GM23248 (cell line): ENCODE measurements at regions of chr1 and their contacts with region 1.

Region 1: DNA sequence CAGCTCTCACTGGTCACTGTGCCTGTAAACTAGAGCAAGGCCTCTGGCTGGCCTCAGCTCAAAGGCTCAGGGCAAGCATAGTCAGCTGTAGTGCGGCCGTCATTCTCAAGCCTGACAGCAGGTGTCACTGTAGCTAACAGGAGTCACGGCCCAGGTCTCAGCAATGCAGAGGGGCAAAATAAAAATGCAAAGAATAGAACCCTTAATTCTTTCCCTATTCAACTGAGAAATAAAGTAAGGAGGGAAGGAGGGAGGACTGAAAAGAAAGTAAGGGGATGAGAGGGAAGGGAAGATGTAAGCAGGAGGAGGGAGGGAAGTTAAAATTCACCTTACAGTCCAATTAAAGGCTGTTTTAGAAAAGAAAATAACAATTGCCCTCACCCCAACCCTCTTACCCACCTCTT is 106.1 kb downstream of the KIAA0319L start:
- DNase-seq: peak; percentile 87
- H3K4me3 ChIP-seq: no peak overlapping the region
- H3K27ac ChIP-seq: no peak overlapping the region
- H3K4me1 ChIP-seq: peaks cover 55% of the 10 kb centered on the region
- H3K27me3 ChIP-seq: no peaks in the 10 kb centered on the region

Region 2: GRCh38 chr1:34441259-34442069 is 1009.7 kb before region 1 on chr1:
- in situ Hi-C with region 1: no loop called
- DNase-seq: no peak
- H3K4me3 ChIP-seq: no peak overlapping the region
- H3K27ac ChIP-seq: no peak overlapping the region
- H3K4me1 ChIP-seq: no peaks in the 10 kb centered on the region
- H3K27me3 ChIP-seq: peaks cover 26% of the 10 kb centered on the region

Region 3: DNA sequence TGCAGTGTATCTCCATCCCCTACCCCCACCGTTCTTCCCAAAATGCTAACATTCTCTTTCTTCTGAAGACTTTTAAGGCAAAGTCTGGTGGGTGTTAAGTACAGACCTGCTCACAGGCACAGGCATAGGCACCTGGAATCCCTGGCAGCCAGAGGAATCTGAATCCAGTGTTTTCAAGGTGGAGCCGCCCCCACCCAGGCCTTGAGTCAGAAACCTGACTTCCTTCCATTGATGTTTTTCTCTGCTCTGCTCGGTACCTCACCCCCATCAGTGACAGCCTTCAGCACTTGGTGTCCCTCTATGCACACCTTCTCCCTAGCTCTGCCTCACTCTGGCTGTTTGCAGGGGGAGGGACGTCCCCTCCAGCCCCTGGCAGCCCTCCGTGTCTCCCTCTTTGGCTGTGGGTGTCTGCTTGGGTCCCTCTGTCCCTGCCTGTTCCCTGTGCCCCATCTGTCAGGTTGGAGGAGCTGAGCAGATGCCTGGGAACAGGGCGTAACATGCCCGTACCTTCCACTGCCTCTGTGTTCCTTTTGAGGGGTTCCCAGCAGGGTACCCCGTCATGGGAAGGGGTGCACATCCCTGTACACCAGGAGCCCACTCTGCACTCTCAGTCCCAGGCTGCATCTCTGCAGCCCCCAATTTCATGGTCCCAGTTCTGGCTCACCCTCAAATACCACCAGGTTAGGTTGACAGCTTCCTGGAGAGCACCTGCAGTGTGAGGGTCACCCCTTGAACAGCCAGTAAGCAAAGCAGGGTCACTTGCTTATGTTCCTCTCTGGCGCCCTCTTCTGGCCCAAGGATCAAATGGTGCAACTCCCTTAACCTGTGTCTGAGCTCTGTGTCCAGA is 113.1 kb after region 1 on chr1:
- in situ Hi-C with region 1: loop called (anchors 5 kb)
- DNase-seq: peak; percentile 81
- H3K4me3 ChIP-seq: no peak overlapping the region
- H3K27ac ChIP-seq: no peak overlapping the region
- H3K4me1 ChIP-seq: peaks cover 3% of the 10 kb centered on the region
- H3K27me3 ChIP-seq: no peaks in the 10 kb centered on the region